ENCODE measurements at regions of chr9 and their contacts with region 1.

Region 1: DNA sequence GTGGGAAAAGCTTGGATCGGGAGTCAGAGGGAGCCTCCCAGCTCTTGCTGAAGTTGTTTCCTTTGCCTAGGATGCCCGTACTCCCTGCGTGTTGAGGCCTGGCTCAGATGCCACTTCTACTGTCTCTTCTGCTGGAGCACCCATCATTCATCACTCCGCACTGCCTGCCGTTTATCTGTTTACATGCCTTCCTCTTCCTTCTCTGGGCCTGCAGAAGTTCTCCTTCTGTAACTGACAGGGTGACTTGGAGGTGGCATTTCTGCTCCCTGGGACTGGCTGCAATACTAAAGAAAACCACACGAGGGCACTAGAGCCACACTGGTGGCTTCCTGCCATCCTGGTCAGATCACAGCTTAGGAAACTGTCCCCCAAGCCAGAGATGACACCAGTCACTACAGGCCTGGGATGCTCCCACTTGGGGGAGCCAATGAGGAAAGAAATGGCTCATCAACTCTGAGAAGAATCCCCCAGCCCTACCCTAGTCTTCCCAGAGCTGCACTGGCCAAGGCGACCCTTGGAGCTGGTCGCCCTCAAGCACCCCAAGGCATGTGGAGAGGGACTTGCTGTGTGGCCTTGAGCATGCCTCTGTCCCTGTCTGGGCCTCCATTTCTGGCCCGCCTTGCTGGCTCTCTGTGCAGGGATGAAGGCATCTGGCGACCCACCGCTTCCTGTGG is 9.7 kb upstream of the SLC25A51 start:
- DNase-seq: peak; percentile 82
- ATAC-seq: peak; percentile 89
- H3K4me3 ChIP-seq: no peak overlapping the region
- H3K27ac ChIP-seq: no peak overlapping the region
- H3K4me1 ChIP-seq: peaks cover 18% of the 10 kb centered on the region
- H3K27me3 ChIP-seq: no peaks in the 10 kb centered on the region
- CTCF ChIP-seq: peak; percentile 99

Region 2: DNA sequence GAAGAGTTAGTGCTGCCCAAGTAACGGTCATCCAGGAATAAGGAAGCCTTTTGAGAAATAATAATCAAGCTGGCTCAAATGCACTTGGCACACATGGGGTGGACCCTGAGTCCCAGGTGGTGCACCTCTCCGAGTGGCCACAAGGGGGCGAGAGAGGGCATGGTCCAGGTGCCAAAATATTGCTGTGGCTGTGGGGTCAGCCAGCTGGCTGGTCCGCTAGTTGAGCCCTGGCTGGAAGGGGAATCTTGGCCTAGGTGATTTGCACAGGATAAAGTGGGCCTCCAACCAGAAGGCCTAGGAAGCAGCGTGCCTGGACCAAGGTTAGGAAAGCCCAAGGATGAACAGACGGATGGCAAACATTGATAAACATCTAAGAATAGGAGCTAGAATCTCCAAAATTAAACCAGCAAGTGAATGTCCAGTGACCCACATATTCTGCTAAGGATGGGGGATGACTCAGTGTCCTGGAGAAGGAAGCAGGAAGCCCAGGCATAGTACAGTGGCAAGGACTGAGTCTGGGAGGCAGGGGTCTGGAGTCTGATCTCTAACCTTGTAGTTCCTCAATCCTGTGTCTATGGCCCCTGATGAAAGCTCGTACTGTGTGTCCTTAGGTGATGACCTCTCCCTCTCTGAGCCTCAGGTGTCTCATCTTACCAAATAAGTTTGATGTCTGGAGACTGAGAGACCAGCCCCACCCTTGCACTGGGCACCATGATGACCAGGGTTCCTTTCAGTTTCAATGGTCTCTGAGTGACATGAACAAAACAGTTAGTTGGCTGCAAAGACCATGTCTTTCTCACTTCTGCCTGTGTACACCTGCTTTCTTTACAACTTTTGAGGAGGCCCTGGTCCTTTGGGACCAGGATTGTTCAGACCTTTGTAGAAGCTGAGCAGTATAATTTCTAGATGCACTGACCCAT is 174.6 kb after region 1 on chr9:
- intact Hi-C with region 1: loop called (anchors 5 kb)
- DNase-seq: peak; percentile 86
- ATAC-seq: peak; percentile 92
- H3K4me3 ChIP-seq: no peak overlapping the region
- H3K27ac ChIP-seq: no peak overlapping the region
- H3K4me1 ChIP-seq: no peaks in the 10 kb centered on the region
- H3K27me3 ChIP-seq: no peaks in the 10 kb centered on the region
- CTCF ChIP-seq: peak; percentile 99

Region 3: DNA sequence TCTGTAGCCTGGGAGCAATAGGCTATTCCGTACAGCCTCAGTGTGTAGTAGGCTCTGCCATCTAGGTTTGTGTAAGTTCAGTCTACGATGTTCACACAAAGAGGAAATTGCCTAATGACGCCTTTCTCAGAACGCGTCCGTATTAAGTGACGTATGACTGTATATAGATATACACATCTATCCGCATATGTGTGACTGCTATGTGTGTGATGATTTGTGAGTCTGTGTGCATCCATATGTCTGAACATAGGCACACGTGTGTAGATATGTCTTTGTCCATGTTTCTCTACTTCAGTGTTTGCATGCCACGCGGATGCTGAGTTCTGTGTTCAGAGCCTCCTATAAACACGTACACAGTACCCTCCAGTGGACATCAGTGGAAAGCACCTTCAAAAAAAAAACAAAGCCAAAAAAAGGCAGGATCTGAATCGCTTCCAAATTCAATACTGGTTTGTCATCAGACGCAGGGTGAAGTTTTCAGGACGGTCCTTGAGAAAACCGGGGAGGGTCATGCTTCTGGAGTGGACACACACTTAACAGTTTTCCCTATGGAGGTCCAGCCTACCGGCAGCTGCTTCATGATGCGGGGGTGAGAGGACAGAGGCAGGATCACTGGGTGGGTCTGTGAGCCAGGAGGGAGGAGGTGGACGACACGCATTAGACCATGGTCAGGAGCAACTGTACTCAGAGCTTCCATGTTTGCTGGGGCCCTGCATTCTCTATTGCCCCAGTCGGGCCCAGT is 449.4 kb after region 1 on chr9:
- intact Hi-C with region 1: loop called (anchors 10 kb)
- DNase-seq: no peak
- ATAC-seq: peak; percentile 88
- H3K4me3 ChIP-seq: no peak overlapping the region
- H3K27ac ChIP-seq: no peak overlapping the region
- H3K4me1 ChIP-seq: no peaks in the 10 kb centered on the region
- H3K27me3 ChIP-seq: no peaks in the 10 kb centered on the region
- CTCF ChIP-seq: peak; percentile 66